ENCODE measurements at regions of chr17 and their contacts with region 1.

Region 1: GRCh38 chr17:72271603-72272002 is 150.8 kb downstream of the SOX9 start:
- DNase-seq: no peak
- H3K4me3 ChIP-seq: no peak overlapping the region
- H3K4me3 Mint-ChIP-seq: no peak overlapping the region
- H3K27ac Mint-ChIP-seq: no peak overlapping the region
- H3K4me1 ChIP-seq: no peaks in the 10 kb centered on the region
- H3K4me1 Mint-ChIP-seq: no peaks in the 10 kb centered on the region
- H3K27me3 ChIP-seq: no peaks in the 10 kb centered on the region
- H3K27me3 Mint-ChIP-seq: no peaks in the 10 kb centered on the region
- CTCF ChIP-seq: no peak

Region 2: GRCh38 chr17:72388765-72389473 is 117.3 kb after region 1 on chr17:
- CTCF ChIA-PET with region 1: interaction called, 14 read pairs
- POLR2A ChIA-PET with region 1: no interaction called
- intact Hi-C with region 1: no loop called
- DNase-seq: no peak
- H3K4me3 ChIP-seq: no peak overlapping the region
- H3K4me3 Mint-ChIP-seq: no peak overlapping the region
- H3K27ac Mint-ChIP-seq: no peak overlapping the region
- H3K4me1 ChIP-seq: peaks cover 31% of the 10 kb centered on the region
- H3K4me1 Mint-ChIP-seq: peaks cover 31% of the 10 kb centered on the region
- H3K27me3 ChIP-seq: no peaks in the 10 kb centered on the region
- H3K27me3 Mint-ChIP-seq: no peaks in the 10 kb centered on the region
- CTCF ChIP-seq: no peak

Measured in Caco-2 (cell line).